A673 (cell line): ENCODE measurements at regions of chr5 and their contacts with region 1.

Region 1: GRCh38 chr5:133552931-133553525 is 59.3 kb downstream of the FSTL4 start:
- DNase-seq: peak; percentile 76
- H3K4me3 ChIP-seq: no peak overlapping the region
- H3K27ac ChIP-seq: no peak overlapping the region
- H3K4me1 ChIP-seq: no peaks in the 10 kb centered on the region
- H3K27me3 ChIP-seq: peaks cover 18% of the 10 kb centered on the region
- CTCF ChIP-seq: peak; percentile 84

Region 2: GRCh38 chr5:133868946-133869518 is 316.0 kb after region 1 on chr5:
- CTCF ChIA-PET with region 1: no interaction called
- POLR2A ChIA-PET with region 1: no interaction called
- intact Hi-C with region 1: loop called (anchors 2 kb)
- DNase-seq: peak; percentile 89
- H3K4me3 ChIP-seq: no peak overlapping the region
- H3K27ac ChIP-seq: peak overlapping the region; percentile 91
- H3K4me1 ChIP-seq: peaks cover 76% of the 10 kb centered on the region
- H3K27me3 ChIP-seq: no peaks in the 10 kb centered on the region
- CTCF ChIP-seq: peak; percentile 95